ENCODE measurements at regions of chr14 and their contacts with region 1.

Region 1: GRCh38 chr14:75982266-75983018 is 647 bp upstream of the TGFB3 start:
- DNase-seq: peak; percentile 51
- ATAC-seq: peak; percentile 76
- H3K4me3 ChIP-seq: peak overlapping the region; percentile 53 to 86
- H3K27ac ChIP-seq: peak overlapping the region; percentile 42; the same call in 1 of the 2 replicates
- H3K4me1 ChIP-seq: peaks cover 12 to 27% of the 10 kb centered on the region in 2 experiments
- H3K27me3 ChIP-seq: no peaks in the 10 kb centered on the region
- CTCF ChIP-seq: peak; percentile 44 to 69 (median 52); a peak in 5 of 6 replicates
- POLR2A ChIP-seq: no peak
- RAD21 ChIP-seq: peak; percentile 83

Region 2: GRCh38 chr14:75361751-75362433 is 620.5 kb before region 1 on chr14:
- CTCF ChIA-PET with region 1: no interaction called
- POLR2A ChIA-PET with region 1: no interaction called
- RAD21 ChIA-PET with region 1: no interaction called
- intact Hi-C with region 1: no loop called
- DNase-seq: no peak
- ATAC-seq: no peak
- H3K4me3 ChIP-seq: no peak overlapping the region
- H3K27ac ChIP-seq: no peak overlapping the region
- H3K4me1 ChIP-seq: no peaks in the 10 kb centered on the region
- H3K27me3 ChIP-seq: peaks cover 19% of the 10 kb centered on the region
- CTCF ChIP-seq: no peak
- POLR2A ChIP-seq: no peak
- RAD21 ChIP-seq: no peak

Region 3: GRCh38 chr14:75654127-75654732 is 328.2 kb before region 1 on chr14:
- CTCF ChIA-PET with region 1: interaction called, 14 read pairs
- POLR2A ChIA-PET with region 1: no interaction called
- RAD21 ChIA-PET with region 1: no interaction called
- intact Hi-C with region 1: no loop called
- DNase-seq: peak; percentile 44
- ATAC-seq: peak; percentile 99
- H3K4me3 ChIP-seq: no peak overlapping the region
- H3K27ac ChIP-seq: no peak overlapping the region
- H3K4me1 ChIP-seq: peaks cover 0 to 5% of the 10 kb centered on the region in 2 experiments; a peak in 2 of 4 replicates
- H3K27me3 ChIP-seq: no peaks in the 10 kb centered on the region
- CTCF ChIP-seq: peak; percentile 85 to 99 (median 97)
- POLR2A ChIP-seq: no peak
- RAD21 ChIP-seq: peak; percentile 85

Region 4: DNA sequence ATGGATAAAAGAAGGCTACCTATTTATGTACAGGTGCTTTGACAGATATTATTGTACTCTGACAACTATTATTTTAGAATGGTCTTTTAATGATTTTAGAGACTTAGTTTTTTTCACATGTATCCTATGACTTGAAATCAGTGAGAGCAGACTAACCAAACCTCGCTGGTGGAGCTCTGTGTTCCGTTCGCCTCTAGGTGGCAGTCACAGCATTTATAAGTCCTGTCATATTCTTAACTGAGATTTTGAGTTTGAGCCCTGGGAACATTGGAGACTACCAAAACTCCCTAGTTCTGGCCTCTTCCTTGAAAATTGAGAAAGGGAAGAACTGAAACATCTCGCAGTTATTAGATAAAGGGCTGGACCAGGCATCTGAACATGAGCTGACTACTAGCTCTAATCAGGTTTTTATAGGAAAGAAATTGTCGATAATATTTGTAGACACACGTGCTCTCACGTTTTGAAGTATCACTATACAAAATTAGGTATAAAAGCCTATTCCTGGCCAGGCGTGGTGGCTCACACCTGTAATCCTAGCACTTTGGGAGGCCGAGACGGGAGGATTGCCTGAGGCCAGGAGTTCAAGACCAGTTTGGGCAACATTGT is 273.1 kb before region 1 on chr14:
- CTCF ChIA-PET with region 1: interaction called, 176 read pairs
- POLR2A ChIA-PET with region 1: interaction called, 9 read pairs
- RAD21 ChIA-PET with region 1: interaction called, 12 to 16 read pairs
- intact Hi-C with region 1: loop called (anchors 1 kb)
- DNase-seq: peak; percentile 68
- ATAC-seq: peak; percentile 58
- H3K4me3 ChIP-seq: no peak overlapping the region
- H3K27ac ChIP-seq: no peak overlapping the region
- H3K4me1 ChIP-seq: peaks cover 17 to 18% of the 10 kb centered on the region in 2 experiments
- H3K27me3 ChIP-seq: no peaks in the 10 kb centered on the region
- CTCF ChIP-seq: peak; percentile 68 to 89 (median 78)
- POLR2A ChIP-seq: no peak
- RAD21 ChIP-seq: peak; percentile 76

Region 5: GRCh38 chr14:75794615-75795038 is 187.8 kb before region 1 on chr14:
- CTCF ChIA-PET with region 1: interaction called, 47 read pairs
- POLR2A ChIA-PET with region 1: interaction called, 4 read pairs
- RAD21 ChIA-PET with region 1: interaction called, 6 to 15 read pairs
- intact Hi-C with region 1: loop called (anchors 1 kb)
- DNase-seq: peak; percentile 7
- ATAC-seq: peak; percentile 80
- H3K4me3 ChIP-seq: no peak overlapping the region
- H3K27ac ChIP-seq: no peak overlapping the region
- H3K4me1 ChIP-seq: no peaks in the 10 kb centered on the region
- H3K27me3 ChIP-seq: no peaks in the 10 kb centered on the region
- CTCF ChIP-seq: peak; percentile 22 to 85 (median 41); a peak in 4 of 6 replicates
- POLR2A ChIP-seq: no peak
- RAD21 ChIP-seq: peak; percentile 73

Region 6: DNA sequence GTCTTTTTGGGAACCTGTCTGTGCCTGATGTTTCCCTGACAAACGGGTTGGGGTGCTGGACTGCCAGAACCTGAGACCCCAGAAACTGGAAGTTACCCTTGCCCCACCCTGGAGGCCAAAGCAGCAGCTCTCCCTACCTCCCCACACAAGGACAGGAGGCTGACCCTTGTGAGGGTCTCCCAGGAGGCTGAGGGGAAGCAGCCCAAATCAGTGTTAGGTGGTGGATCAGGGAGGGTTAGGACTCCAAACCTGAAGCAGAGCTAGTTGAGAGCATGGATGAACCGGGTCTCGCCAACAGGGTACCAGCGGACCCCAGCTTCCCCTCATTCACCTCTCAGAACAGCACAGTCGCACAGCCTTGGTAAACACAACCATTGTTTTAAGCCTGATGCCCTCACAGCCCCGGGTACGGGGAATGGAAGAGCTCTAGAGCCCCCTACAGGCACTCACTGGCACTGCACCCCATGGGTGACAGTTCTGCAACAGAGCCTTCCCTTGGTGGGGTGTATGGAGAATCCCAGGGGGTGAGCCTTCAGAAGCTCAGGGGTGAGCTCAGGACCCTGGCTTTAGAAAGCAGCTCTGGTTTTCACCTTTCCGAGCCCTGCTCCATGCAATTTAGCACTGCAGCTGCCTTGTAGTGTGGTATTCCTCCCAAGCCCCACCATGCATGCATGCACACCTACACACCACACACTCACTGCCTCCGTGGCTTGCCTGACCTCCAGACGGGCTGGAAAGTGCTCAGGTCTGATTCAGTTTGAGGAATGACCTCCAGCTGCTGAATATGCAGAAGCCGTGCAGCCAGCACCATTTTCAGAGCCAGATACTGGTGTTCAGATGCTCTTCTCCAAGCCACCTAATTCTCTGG is 404.7 kb after region 1 on chr14:
- CTCF ChIA-PET with region 1: interaction called, 3 read pairs
- POLR2A ChIA-PET with region 1: no interaction called
- RAD21 ChIA-PET with region 1: no interaction called
- intact Hi-C with region 1: loop called (anchors 5 kb)
- DNase-seq: peak; percentile 37
- ATAC-seq: peak; percentile 99
- H3K4me3 ChIP-seq: no peak overlapping the region
- H3K27ac ChIP-seq: no peak overlapping the region
- H3K4me1 ChIP-seq: peaks cover 0 to 3% of the 10 kb centered on the region in 2 experiments; a peak in 1 of 4 replicates
- H3K27me3 ChIP-seq: peaks cover 39% of the 10 kb centered on the region
- CTCF ChIP-seq: peak; percentile 74 to 100 (median 98); a peak in 5 of 6 replicates
- POLR2A ChIP-seq: no peak
- RAD21 ChIP-seq: peak; percentile 93

Measured in HCT116 (cell line).